ENCODE measurements at regions of chr10 and their contacts with region 1.

Region 1: GRCh38 chr10:101779544-101780186 is 3.6 kb downstream of the NPM3 start:
- DNase-seq: peak; percentile 17
- H3K4me3 ChIP-seq: peak overlapping the region; percentile 30 to 67 (median 46)
- H3K27ac ChIP-seq: no peak overlapping the region
- H3K4me1 ChIP-seq: peaks cover 54 to 85% (median 60%) of the 10 kb centered on the region in 3 donors
- H3K27me3 ChIP-seq: peaks cover 15 to 51% (median 19%) of the 10 kb centered on the region in 4 donors
- CTCF ChIP-seq: peak; percentile 67 to 86 (median 80)
- POLR2A ChIP-seq: no peak

Region 2: DNA sequence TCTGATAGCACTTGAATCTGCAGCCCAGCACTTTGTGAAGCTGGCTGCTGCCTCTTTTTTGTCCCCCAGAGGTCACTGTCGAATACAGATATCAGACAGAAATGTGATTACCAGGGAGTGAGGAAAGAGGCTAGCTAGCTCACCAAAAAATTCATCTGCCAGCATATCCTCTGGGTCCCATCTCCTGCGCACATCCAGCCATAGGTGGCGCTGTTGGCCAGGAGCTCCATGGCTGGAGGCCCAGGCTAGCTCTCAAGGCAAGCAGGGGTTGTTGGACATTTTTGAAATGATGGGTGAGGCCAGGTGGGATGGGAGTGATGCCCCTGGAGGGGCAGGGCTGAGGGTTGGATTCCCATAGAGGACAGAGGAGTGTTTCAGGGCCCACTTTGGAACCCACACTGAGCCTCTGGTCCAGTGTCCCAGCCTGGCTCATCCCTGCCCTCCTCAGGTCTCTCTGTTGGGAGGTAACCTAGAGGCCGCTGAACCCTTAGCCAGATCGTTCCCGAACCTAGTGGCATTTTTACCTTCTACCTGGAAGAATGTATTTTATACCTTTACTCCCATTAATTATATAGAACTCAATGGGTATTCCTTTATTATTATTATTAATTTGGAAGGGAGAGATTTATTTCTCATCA is 176.8 kb before region 1 on chr10:
- intact Hi-C with region 1: loop called (anchors 5 kb)
- DNase-seq: no peak
- H3K4me3 ChIP-seq: no peak overlapping the region
- H3K27ac ChIP-seq: no peak overlapping the region
- H3K4me1 ChIP-seq: no peaks in the 10 kb centered on the region
- H3K27me3 ChIP-seq: no peaks in the 10 kb centered on the region
- CTCF ChIP-seq: peak in 5 of 6 experiments; percentile 67 to 92 (median 81)
- POLR2A ChIP-seq: no peak

Region 3: DNA sequence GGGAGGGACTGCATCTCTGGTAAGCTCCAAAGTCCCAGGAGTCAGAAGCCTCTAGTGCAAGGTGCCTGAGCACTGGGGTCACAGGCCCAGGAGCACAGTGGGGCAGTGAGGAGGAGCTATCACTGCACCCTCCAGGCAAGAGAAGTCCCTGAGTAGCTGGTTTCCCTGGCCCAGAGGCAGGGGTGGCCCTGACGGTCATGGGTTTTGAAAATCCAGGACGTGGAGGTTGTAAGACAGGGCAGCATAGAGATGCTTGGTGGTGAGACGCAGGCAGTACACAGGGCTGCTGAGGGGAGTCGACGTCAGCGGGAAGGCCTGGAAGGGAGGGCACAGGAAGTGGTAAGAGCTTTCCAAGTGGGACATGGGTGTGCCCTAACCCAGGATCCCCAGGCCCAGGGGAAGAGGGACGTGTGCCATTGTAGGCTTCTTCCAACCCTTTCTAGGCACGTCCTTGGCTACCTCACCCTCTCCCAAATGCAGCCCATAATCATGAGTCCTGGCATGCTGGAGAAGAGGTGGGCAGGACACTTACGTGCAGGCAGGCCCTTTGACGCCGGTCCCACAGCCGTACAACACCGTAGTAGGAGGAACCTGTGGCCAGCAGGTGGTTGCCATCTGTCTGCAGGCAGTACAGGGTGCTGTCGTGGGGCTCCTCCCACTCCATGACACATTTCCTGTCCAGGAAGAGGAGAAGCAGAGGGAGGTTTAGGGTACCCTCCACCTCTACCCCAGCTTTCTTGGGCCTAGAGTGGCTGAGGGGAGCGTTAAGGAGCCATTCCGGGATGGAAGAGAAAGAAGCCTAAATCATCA is 168.4 kb before region 1 on chr10:
- intact Hi-C with region 1: loop called (anchors 5 kb)
- DNase-seq: no peak
- H3K4me3 ChIP-seq: no peak overlapping the region
- H3K27ac ChIP-seq: no peak overlapping the region
- H3K4me1 ChIP-seq: no peaks in the 10 kb centered on the region
- H3K27me3 ChIP-seq: no peaks in the 10 kb centered on the region
- CTCF ChIP-seq: no peak
- POLR2A ChIP-seq: no peak

Region 4: GRCh38 chr10:101644002-101644401 is 135.7 kb before region 1 on chr10:
- intact Hi-C with region 1: no loop called
- DNase-seq: no peak
- H3K4me3 ChIP-seq: no peak overlapping the region
- H3K27ac ChIP-seq: no peak overlapping the region
- H3K4me1 ChIP-seq: no peaks in the 10 kb centered on the region
- H3K27me3 ChIP-seq: no peaks in the 10 kb centered on the region
- CTCF ChIP-seq: no peak
- POLR2A ChIP-seq: no peak

Region 5: DNA sequence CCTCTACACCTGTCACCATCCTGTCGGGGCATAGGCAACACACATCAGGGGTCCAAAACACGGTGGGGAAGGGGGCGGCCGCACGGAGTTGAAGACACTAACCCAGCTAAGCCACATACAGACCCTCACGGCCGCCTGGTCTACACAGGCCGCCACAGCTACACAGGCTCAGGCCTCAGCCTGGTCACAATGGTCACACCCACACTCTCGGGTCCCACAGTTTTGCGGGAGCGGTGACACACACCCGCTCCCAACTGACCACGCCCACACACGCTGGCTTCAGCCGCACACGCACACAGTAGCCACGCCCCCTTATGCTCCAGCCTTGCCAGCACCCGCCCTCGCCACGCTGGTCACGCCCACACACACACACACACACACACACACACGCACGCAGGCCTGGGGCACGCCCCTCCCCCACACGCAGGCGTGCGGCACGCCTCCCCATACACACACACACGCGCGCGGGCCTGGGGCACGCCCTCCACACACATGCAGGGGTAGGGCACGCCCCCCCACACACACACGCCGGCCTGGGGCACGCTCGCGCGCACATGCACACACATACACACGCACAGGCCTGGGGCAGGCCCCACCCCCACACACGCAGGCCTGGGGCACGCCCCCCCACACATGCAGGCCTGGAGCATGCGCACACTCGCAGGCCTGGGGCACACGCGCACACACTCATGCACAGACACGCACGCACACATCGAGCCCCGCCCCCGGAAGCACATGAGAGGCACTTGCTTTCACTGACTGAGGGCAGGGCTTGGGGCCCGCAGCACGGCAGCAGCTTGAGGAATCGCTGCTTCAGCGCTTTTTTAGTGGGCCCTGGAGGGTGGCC is 50.9 kb after region 1 on chr10:
- intact Hi-C with region 1: no loop called
- DNase-seq: peak; percentile 91
- H3K4me3 ChIP-seq: peak overlapping the region; percentile 34 to 71 (median 54)
- H3K27ac ChIP-seq: peak overlapping the region; percentile 70 to 88 (median 81)
- H3K4me1 ChIP-seq: peaks cover 16 to 43% (median 18%) of the 10 kb centered on the region in 3 donors
- H3K27me3 ChIP-seq: no peaks in the 10 kb centered on the region
- CTCF ChIP-seq: no peak
- POLR2A ChIP-seq: peak in 1 of 4 donors; percentile 23